PC-9 (cell line): ENCODE measurements at regions of chr6 and their contacts with region 1.

Region 1: DNA sequence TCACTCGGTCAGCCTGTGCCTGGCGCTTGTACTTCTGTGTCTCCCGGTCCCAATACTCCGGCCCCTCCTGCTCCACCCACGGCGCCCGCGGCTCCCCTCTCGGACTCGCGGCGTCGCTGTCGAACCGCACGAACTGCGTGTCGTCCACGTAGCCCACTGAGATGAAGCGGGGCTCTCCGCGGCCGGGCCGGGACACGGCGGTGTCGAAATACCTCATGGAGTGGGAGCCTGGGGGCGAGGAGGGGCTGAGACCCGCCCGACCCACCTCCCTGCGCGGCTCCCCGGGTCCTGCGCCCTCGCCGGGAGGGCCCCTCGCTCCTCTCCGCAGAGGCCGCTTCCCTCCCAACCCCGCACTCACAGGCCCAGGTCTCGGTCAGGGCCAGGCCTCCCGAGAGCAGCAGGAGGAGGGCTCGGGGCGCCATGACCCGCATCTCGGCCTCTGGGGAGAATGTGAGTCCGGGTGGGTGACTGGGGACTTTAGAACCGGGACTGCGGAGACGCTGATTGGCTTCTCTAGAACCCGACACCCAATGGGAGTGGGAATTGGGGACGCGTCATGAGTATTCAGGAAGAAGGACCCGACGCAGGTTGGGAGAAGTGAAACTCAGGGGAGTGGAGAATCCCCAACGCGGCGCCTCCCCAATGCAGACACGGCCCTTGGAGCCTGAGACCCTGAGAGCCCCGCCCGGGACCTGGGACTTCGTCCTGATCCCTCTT is at the start of gene HLA-C:
- DNase-seq: peak; percentile 86 to 88
- H3K4me3 ChIP-seq: peak within 1 kb of the TSS; percentile 67
- H3K27ac ChIP-seq: peak within 1 kb of the TSS; percentile 32; the same call in 1 of the 2 replicates
- H3K4me1 ChIP-seq: 0 out of 2 replicates have a peak, but pooled peaks cover 3% of the 10 kb centered on the region
- H3K27me3 ChIP-seq: peaks cover 7% of the 10 kb centered on the region
- CTCF ChIP-seq: no peak
- total RNA-seq, gene HLA-C: 305 and 374 TPM in 2 replicates

Region 2: GRCh38 chr6:31356946-31357466 is 85.2 kb after region 1 on chr6 and contains the start of gene HLA-B:
- CTCF ChIA-PET with region 1: no interaction called
- POLR2A ChIA-PET with region 1: no interaction called
- intact Hi-C with region 1: loop called (anchors 1 kb)
- DNase-seq: peak; percentile 47 to 49
- H3K4me3 ChIP-seq: peak within 1 kb of the TSS; percentile 58; the same call in 1 of the 2 replicates
- H3K27ac ChIP-seq: no peak within 1 kb of the TSS
- H3K4me1 ChIP-seq: no peaks in the 10 kb centered on the region
- H3K27me3 ChIP-seq: peaks cover 16% of the 10 kb centered on the region
- CTCF ChIP-seq: no peak
- total RNA-seq, gene HLA-B: 137 and 204 TPM in 2 replicates